ENCODE measurements at regions of chr12 and their contacts with region 1.

Region 1: GRCh38 chr12:46198913-46199312 is 69.9 kb downstream of the SLC38A1 start:
- DNase-seq: no peak
- ATAC-seq: peak; percentile 47
- H3K4me3 Mint-ChIP-seq: no peak overlapping the region
- H3K27ac Mint-ChIP-seq: peak overlapping the region; percentile 22
- H3K4me1 Mint-ChIP-seq: peaks cover 10% of the 10 kb centered on the region
- H3K27me3 Mint-ChIP-seq: no peaks in the 10 kb centered on the region

Region 2: DNA sequence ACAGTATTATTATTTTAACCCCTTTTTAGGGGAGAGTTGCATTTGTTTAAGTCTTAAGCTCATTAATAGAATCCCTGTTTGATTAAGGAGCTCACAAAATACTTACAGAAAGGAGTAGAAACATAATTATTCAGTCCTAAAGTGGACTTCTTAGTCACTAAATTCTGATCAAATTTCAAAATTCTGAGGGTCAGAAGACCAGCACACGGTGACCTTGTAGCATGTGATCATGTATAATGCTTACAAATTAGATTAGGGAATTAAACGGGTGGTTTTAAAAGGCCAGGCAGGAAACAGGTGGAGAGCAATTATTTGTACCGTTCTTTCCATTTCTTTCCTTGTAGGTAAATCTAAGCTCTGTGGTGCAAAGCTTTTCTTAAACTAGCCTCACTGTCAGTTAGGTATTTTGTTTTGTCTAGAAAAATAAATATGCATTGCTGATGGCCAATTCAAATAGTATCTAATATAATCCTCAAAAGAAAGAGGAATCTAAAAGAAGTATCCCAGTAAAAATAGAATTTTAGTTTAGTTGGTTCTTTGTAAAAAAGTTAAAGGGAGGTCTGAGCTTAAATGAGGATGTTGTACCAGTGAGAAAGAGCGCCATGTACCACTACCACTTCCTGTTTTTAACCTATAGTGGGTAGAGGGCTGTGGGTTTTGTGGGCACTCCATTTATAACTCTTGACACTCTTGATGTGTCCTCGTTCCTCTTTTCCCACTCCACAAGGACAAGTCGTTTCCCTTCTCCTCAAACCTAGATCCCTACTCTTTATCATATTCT is 18.8 kb after region 1 on chr12:
- POLR2A ChIA-PET with region 1: interaction called, 10 read pairs
- DNase-seq: peak; percentile 47
- ATAC-seq: no peak
- H3K4me3 Mint-ChIP-seq: peak overlapping the region; percentile 75
- H3K27ac Mint-ChIP-seq: peak overlapping the region; percentile 93
- H3K4me1 Mint-ChIP-seq: peaks cover 86% of the 10 kb centered on the region
- H3K27me3 Mint-ChIP-seq: no peaks in the 10 kb centered on the region

Measured in activated naive CD8-positive, alpha-beta T cell treated with anti-CD3 and anti-CD28 coated beads, Interleukin-2, amount 10 ng/mL, durations not matched to agents 7 days and 5 days (primary cell).